K562 (cell line): ENCODE measurements at regions of chr4 and their contacts with region 1.

Region 1: GRCh38 chr4:179307297-179308136 is 1865.3 kb upstream of the AGA start:
- DNase-seq: peak; percentile 10 to 42 (median 30)
- ATAC-seq: peak; percentile 49; the same call in 1 of the 3 replicates
- H3K4me3 ChIP-seq: no peak overlapping the region
- H3K27ac ChIP-seq: no peak overlapping the region
- H3K4me1 ChIP-seq: no peaks in the 10 kb centered on the region
- H3K27me3 ChIP-seq: no peaks in the 10 kb centered on the region
- CTCF ChIP-seq: peak; percentile 12 to 61 (median 39); a peak in 3 of 6 replicates
- EP300 ChIP-seq: no peak
- POLR2A ChIP-seq: no peak
- RAD21 ChIP-seq: peak in 1 of 2 experiments; percentile 49; a peak in 2 of 4 replicates

Region 2: GRCh38 chr4:177555007-177555574 is 1752.4 kb before region 1 on chr4:
- CTCF ChIA-PET with region 1: no interaction called
- POLR2A ChIA-PET with region 1: no interaction called
- in situ Hi-C with region 1: no loop called
- intact Hi-C with region 1: loop called (anchors 10 kb)
- DNase-seq: peak; percentile 10 to 38 (median 20)
- ATAC-seq: no peak; the same call in 2 of the 3 replicates
- H3K4me3 ChIP-seq: no peak overlapping the region
- H3K27ac ChIP-seq: no peak overlapping the region
- H3K4me1 ChIP-seq: peaks cover 0 to 3% of the 10 kb centered on the region in 2 experiments; a peak in 1 of 5 replicates
- H3K27me3 ChIP-seq: no peaks in the 10 kb centered on the region
- CTCF ChIP-seq: peak; percentile 22 to 65 (median 54); a peak in 5 of 6 replicates
- EP300 ChIP-seq: no peak
- POLR2A ChIP-seq: no peak
- RAD21 ChIP-seq: peak; percentile 66 to 79

Region 3: GRCh38 chr4:179007755-179008154 is 299.8 kb before region 1 on chr4:
- CTCF ChIA-PET with region 1: no interaction called
- POLR2A ChIA-PET with region 1: no interaction called
- in situ Hi-C with region 1: no loop called
- intact Hi-C with region 1: no loop called
- DNase-seq: no peak
- ATAC-seq: no peak
- H3K4me3 ChIP-seq: no peak overlapping the region
- H3K27ac ChIP-seq: no peak overlapping the region
- H3K4me1 ChIP-seq: no peaks in the 10 kb centered on the region
- H3K27me3 ChIP-seq: no peaks in the 10 kb centered on the region
- CTCF ChIP-seq: no peak
- EP300 ChIP-seq: no peak
- POLR2A ChIP-seq: no peak
- RAD21 ChIP-seq: no peak

Region 4: DNA sequence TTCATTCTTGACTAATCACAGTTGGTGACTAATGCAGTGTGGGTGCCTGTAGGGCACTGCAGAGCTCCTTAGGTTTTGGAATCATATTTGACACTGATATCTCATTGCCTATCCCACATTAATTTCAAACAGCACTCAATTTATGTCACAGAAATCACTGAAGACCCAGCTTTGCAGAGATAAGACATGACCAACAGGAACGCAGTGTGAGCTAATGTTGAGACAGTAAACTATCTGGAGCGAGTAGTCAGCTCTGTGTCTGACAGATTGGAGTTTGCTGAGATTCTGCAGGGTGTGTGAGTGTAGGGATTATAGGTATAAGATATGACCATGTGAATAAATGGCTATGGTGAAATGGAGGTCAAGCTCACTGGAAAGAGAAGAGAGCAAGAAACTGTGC is 279.2 kb before region 1 on chr4:
- CTCF ChIA-PET with region 1: no interaction called
- POLR2A ChIA-PET with region 1: no interaction called
- in situ Hi-C with region 1: no loop called
- intact Hi-C with region 1: no loop called
- DNase-seq: no peak
- ATAC-seq: no peak
- H3K4me3 ChIP-seq: no peak overlapping the region
- H3K27ac ChIP-seq: no peak overlapping the region
- H3K4me1 ChIP-seq: no peaks in the 10 kb centered on the region
- H3K27me3 ChIP-seq: no peaks in the 10 kb centered on the region
- CTCF ChIP-seq: no peak
- EP300 ChIP-seq: no peak
- POLR2A ChIP-seq: no peak
- RAD21 ChIP-seq: no peak